ENCODE measurements at regions of chr6 and their contacts with region 1.

Region 1: GRCh38 chr6:81752138-81752920 is at the start of gene TENT5A:
- DNase-seq: peak; percentile 68
- H3K4me3 ChIP-seq: peak within 1 kb of the TSS; percentile 52 to 78 (median 69)
- H3K27ac ChIP-seq: peak within 1 kb of the TSS; percentile 42
- H3K4me1 ChIP-seq: peaks cover 8% of the 10 kb centered on the region
- H3K27me3 ChIP-seq: peaks cover 0 to 11% of the 10 kb centered on the region in 2 experiments
- CTCF ChIP-seq: no peak
- POLR2A ChIP-seq: peak; percentile 59
- total RNA-seq, gene TENT5A: 1.2 and 2.4 TPM in 2 replicates

Region 2: DNA sequence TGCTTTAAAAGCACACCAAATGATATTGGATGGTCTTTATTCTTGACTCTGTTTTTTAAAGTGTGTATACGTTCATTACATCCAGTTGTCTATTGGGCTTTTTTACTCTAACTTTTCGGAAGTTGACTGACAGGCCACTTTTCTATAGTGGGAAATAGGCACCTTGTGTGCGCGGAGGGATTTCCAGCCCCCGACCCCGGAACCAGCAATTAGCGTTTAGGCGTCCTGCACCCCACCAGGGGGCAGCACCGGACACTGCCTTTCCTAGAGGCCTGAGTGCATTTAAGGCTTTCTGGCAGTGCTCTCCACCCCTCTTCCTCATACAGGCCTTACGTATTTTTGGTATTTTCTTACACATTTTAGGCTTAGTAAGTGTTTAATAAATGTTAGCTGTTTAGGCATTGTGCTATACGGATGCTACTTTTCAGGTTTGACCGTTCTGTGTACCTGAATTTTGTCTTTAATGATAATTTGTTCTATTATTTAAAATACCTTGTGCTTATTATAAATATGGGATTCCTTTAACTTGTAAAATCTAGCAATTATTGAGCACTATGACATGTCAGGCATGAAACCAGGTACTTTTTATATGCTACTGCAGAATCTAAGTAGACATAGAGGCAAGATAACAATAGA is 1414.0 kb before region 1 on chr6:
- CTCF ChIA-PET with region 1: no interaction called
- POLR2A ChIA-PET with region 1: no interaction called
- dilution Hi-C with region 1: no loop called
- intact Hi-C with region 1: loop called (anchors 5 kb)
- DNase-seq: peak; percentile 31
- H3K4me3 ChIP-seq: no peak overlapping the region
- H3K27ac ChIP-seq: no peak overlapping the region
- H3K4me1 ChIP-seq: peaks cover 4% of the 10 kb centered on the region
- H3K27me3 ChIP-seq: no peaks in the 10 kb centered on the region
- CTCF ChIP-seq: peak; percentile 64 to 69
- POLR2A ChIP-seq: no peak

Region 3: DNA sequence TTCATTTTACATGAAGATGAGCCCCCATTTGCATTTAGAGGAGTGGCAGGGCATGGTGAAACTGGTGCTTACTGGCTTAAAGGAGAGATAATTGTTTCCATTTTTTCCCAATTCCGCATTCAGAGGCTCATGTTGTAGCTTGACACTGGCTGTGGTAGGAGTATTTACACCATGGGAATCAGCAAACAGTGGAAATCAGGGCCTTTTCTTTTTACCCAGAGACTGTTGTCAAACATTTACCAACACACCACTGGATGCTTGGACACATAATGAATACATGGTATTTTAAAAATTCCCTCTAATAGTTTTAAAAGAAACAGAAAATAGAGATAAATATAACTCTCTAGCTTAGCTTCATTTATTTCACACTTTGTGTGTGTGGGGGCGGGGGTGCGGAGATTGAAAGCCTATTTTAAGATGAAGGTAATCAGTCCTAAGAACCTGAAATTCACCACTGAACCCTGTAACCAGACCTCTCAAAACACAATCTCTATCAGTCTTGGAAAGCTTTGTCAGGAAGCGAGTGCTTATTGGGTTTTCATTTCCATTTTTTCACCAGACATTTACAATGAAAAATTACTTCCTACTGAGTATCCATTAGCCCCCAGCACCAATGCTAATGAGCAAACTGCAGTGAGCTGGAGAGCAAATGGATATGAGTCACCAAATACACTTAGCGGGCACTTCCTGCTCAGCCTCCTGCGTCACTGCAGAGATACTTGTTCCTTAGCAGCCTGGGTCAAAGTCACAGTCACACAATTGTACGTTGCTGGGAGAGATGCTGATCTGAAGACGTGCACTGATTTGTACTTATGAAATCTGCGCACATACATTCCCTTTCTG is 1113.9 kb before region 1 on chr6:
- CTCF ChIA-PET with region 1: no interaction called
- POLR2A ChIA-PET with region 1: no interaction called
- dilution Hi-C with region 1: no loop called
- intact Hi-C with region 1: loop called (anchors 1 kb)
- DNase-seq: peak; percentile 97
- H3K4me3 ChIP-seq: no peak overlapping the region
- H3K27ac ChIP-seq: peak overlapping the region; percentile 94
- H3K4me1 ChIP-seq: peaks cover 17% of the 10 kb centered on the region
- H3K27me3 ChIP-seq: no peaks in the 10 kb centered on the region
- CTCF ChIP-seq: no peak
- POLR2A ChIP-seq: peak; percentile 47

Region 4: GRCh38 chr6:80903711-80904110 is 848.6 kb before region 1 on chr6:
- CTCF ChIA-PET with region 1: no interaction called
- POLR2A ChIA-PET with region 1: no interaction called
- dilution Hi-C with region 1: no loop called
- intact Hi-C with region 1: no loop called
- DNase-seq: no peak
- H3K4me3 ChIP-seq: no peak overlapping the region
- H3K27ac ChIP-seq: no peak overlapping the region
- H3K4me1 ChIP-seq: no peaks in the 10 kb centered on the region
- H3K27me3 ChIP-seq: no peaks in the 10 kb centered on the region
- CTCF ChIP-seq: no peak
- POLR2A ChIP-seq: no peak

Region 5: GRCh38 chr6:81614292-81614691 is 138.0 kb before region 1 on chr6:
- CTCF ChIA-PET with region 1: no interaction called
- POLR2A ChIA-PET with region 1: no interaction called
- dilution Hi-C with region 1: no loop called
- intact Hi-C with region 1: loop called (anchors 2 kb)
- DNase-seq: peak; percentile 77
- H3K4me3 ChIP-seq: peak overlapping the region in 1 of 3 experiments; percentile 8
- H3K27ac ChIP-seq: peak overlapping the region; percentile 76
- H3K4me1 ChIP-seq: peaks cover 22% of the 10 kb centered on the region
- H3K27me3 ChIP-seq: no peaks in the 10 kb centered on the region
- CTCF ChIP-seq: no peak
- POLR2A ChIP-seq: no peak

Region 6: GRCh38 chr6:81853982-81854381 is 101.7 kb after region 1 on chr6:
- CTCF ChIA-PET with region 1: no interaction called
- POLR2A ChIA-PET with region 1: no interaction called
- dilution Hi-C with region 1: no loop called
- intact Hi-C with region 1: loop called (anchors 2 kb)
- DNase-seq: no peak
- H3K4me3 ChIP-seq: no peak overlapping the region
- H3K27ac ChIP-seq: peak overlapping the region; percentile 34
- H3K4me1 ChIP-seq: peaks cover 16% of the 10 kb centered on the region
- H3K27me3 ChIP-seq: no peaks in the 10 kb centered on the region
- CTCF ChIP-seq: no peak
- POLR2A ChIP-seq: no peak

Region 7: GRCh38 chr6:82040405-82041221 is 288.3 kb after region 1 on chr6:
- CTCF ChIA-PET with region 1: interaction called, 13 read pairs
- POLR2A ChIA-PET with region 1: no interaction called
- dilution Hi-C with region 1: no loop called
- intact Hi-C with region 1: loop called (anchors 1 kb)
- DNase-seq: peak; percentile 72
- H3K4me3 ChIP-seq: no peak overlapping the region
- H3K27ac ChIP-seq: no peak overlapping the region
- H3K4me1 ChIP-seq: peaks cover 9% of the 10 kb centered on the region
- H3K27me3 ChIP-seq: no peaks in the 10 kb centered on the region
- CTCF ChIP-seq: peak; percentile 73 to 76
- POLR2A ChIP-seq: no peak

Measured in endothelial cell of umbilical vein (primary cell).